HepG2 (cell line): ENCODE measurements at regions of chr9 and their contacts with region 1.

Region 1: GRCh38 chr9:136949817-136950655 is 2.0 kb upstream of the LCN12 start:
- DNase-seq: peak; percentile 94
- ATAC-seq: peak; percentile 80
- H3K4me3 ChIP-seq: peak overlapping the region; percentile 68 to 90 (median 87)
- H3K27ac ChIP-seq: peak overlapping the region; percentile 95
- H3K4me1 ChIP-seq: peaks cover 56% of the 10 kb centered on the region
- H3K27me3 ChIP-seq: no peaks in the 10 kb centered on the region
- CTCF ChIP-seq: peak; percentile 58
- EP300 ChIP-seq: no peak; a peak in 1 of 4 replicates
- POLR2A ChIP-seq: peak in 1 of 2 experiments; percentile 42; a peak in 1 of 4 replicates
- RAD21 ChIP-seq: peak; percentile 25

Region 2: DNA sequence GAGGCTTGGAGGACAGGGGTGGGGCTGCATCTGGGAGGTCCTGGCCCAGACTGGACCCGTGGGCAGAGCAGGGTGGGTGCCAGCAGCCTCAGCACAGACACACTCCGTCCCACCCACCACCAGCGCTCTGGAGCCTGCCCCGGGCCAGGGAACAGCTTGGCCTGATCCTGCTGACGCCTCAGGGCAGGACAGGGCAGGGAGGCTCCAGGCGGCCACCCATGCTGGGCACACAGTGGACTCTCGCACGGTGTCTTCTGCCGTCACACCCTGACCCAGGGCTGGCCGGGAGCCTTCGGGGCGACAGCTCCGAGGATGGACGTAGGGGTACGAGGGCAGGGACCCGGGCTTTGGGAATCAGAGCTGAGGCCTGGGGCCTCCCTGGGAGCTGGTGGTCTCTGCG is 19.1 kb after region 1 on chr9:
- CTCF ChIA-PET with region 1: no interaction called
- POLR2A ChIA-PET with region 1: interaction called, 5 read pairs
- in situ Hi-C with region 1: no loop called
- intact Hi-C with region 1: loop called (anchors 2 kb)
- DNase-seq: no peak
- ATAC-seq: peak; percentile 54
- H3K4me3 ChIP-seq: no peak overlapping the region
- H3K27ac ChIP-seq: no peak overlapping the region
- H3K4me1 ChIP-seq: peaks cover 54% of the 10 kb centered on the region
- H3K27me3 ChIP-seq: peaks cover 23 to 69% of the 10 kb centered on the region in 2 experiments
- CTCF ChIP-seq: no peak
- EP300 ChIP-seq: no peak
- POLR2A ChIP-seq: no peak
- RAD21 ChIP-seq: no peak

Region 3: DNA sequence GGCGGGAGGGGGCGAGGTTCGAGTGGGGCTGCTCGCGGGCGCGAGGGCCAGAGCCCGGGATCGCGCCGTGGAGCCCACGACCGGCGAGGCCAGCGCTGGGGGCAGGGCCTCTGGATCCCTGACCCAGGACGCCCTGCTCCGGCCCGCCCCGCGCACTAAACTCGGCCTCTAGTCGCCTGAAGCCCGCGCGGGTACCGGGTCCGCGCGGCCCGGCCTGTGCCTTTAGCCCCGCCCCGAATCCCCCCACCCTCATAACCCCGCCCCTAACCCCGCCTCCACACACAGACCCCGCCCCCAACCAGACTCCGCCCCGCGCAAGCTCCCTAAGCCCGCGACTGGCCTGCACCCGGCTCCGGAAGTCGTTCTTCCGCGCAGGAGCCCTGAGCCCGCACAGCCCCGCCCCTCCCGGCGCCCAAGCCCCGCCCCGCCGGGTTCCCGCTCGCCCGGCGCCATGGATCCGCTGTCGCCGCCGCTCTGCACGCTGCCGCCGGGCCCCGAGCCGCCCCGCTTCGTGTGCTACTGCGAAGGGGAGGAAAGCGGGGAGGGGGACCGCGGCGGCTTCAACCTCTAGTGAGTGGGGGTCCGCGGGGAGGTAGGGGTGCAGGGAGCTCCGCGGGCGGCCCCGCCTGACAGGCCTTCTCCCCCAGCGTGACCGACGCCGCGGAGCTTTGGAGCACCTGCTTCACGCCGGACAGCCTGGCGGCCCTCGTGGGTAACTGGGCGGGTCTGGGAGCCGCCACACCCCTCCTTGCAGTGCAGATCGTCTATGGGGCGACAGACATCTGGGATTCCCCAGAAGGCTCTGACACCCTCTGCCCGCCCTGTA is 42.2 kb after region 1 on chr9 and contains the start of gene PAXX:
- CTCF ChIA-PET with region 1: no interaction called
- POLR2A ChIA-PET with region 1: interaction called, 8 read pairs
- in situ Hi-C with region 1: no loop called
- intact Hi-C with region 1: loop called (anchors 2 kb)
- DNase-seq: peak; percentile 70
- ATAC-seq: peak; percentile 72
- H3K4me3 ChIP-seq: peak within 1 kb of the TSS; percentile 61 to 83 (median 73)
- H3K27ac ChIP-seq: peak within 1 kb of the TSS; percentile 52
- H3K4me1 ChIP-seq: peaks cover 64% of the 10 kb centered on the region
- H3K27me3 ChIP-seq: peaks cover 3 to 9% of the 10 kb centered on the region in 2 experiments; a peak in 2 of 5 replicates
- CTCF ChIP-seq: no peak
- EP300 ChIP-seq: no peak
- POLR2A ChIP-seq: peak in 1 of 2 experiments; percentile 62; a peak in 2 of 4 replicates
- RAD21 ChIP-seq: peak; percentile 17; the same call in 1 of the 2 replicates
- total RNA-seq, gene PAXX: 20.7 and 31.9 TPM in 2 replicates